ENCODE measurements at regions of chr6 and their contacts with region 1.

Region 1: GRCh38 chr6:43228951-43229802 is at the start of gene DNPH1:
- DNase-seq: peak; percentile 77
- H3K4me3 Mint-ChIP-seq: peak within 1 kb of the TSS; percentile 88
- H3K27ac Mint-ChIP-seq: peak within 1 kb of the TSS; percentile 92
- H3K4me1 Mint-ChIP-seq: peaks cover 24% of the 10 kb centered on the region
- H3K27me3 Mint-ChIP-seq: peaks cover 16% of the 10 kb centered on the region
- total RNA-seq, gene DNPH1: 70.5 and 76.7 TPM in 2 replicates

Region 2: GRCh38 chr6:43070028-43070632 is 159.0 kb before region 1 on chr6:
- intact Hi-C with region 1: no loop called
- DNase-seq: no peak
- H3K4me3 Mint-ChIP-seq: no peak overlapping the region
- H3K27ac Mint-ChIP-seq: no peak overlapping the region
- H3K4me1 Mint-ChIP-seq: peaks cover 4% of the 10 kb centered on the region
- H3K27me3 Mint-ChIP-seq: peaks cover 2% of the 10 kb centered on the region

Region 3: GRCh38 chr6:43254138-43254817 is 25.1 kb after region 1 on chr6:
- intact Hi-C with region 1: loop called (anchors 2 kb)
- DNase-seq: no peak
- H3K4me3 Mint-ChIP-seq: no peak overlapping the region
- H3K27ac Mint-ChIP-seq: peak overlapping the region; percentile 69
- H3K4me1 Mint-ChIP-seq: peaks cover 46% of the 10 kb centered on the region
- H3K27me3 Mint-ChIP-seq: peaks cover 16% of the 10 kb centered on the region

Measured in activated T-helper 2 cell treated with anti-CD3 and anti-CD28 coated beads, Interferon-gamma antibody, Interleukin-2, Interleukin-4, amounts not matched to agents 10 μg/mL and 5 μg/mL and 100 μg/mL, durations not matched to agents 14 hours and 24 hours and 36 hours (primary cell).